Activated naive CD4-positive, alpha-beta T cell treated with anti-CD3 and anti-CD28 coated beads for 36 hours (primary cell): ENCODE measurements at regions of chr9 and their contacts with region 1.

Region 1: GRCh38 chr9:84170521-84171141 is 169.9 kb downstream of the SLC28A3 start:
- DNase-seq: no peak
- H3K4me3 Mint-ChIP-seq: no peak overlapping the region
- H3K27ac Mint-ChIP-seq: no peak overlapping the region
- H3K4me1 Mint-ChIP-seq: no peaks in the 10 kb centered on the region
- H3K27me3 Mint-ChIP-seq: peaks cover 1% of the 10 kb centered on the region

Region 2: GRCh38 chr9:84136092-84136868 is 34.4 kb before region 1 on chr9:
- CTCF ChIA-PET with region 1: interaction called, 10 read pairs
- intact Hi-C with region 1: no loop called
- DNase-seq: no peak
- H3K4me3 Mint-ChIP-seq: no peak overlapping the region
- H3K27ac Mint-ChIP-seq: no peak overlapping the region
- H3K4me1 Mint-ChIP-seq: peaks cover 9% of the 10 kb centered on the region
- H3K27me3 Mint-ChIP-seq: peaks cover 26% of the 10 kb centered on the region

Region 3: DNA sequence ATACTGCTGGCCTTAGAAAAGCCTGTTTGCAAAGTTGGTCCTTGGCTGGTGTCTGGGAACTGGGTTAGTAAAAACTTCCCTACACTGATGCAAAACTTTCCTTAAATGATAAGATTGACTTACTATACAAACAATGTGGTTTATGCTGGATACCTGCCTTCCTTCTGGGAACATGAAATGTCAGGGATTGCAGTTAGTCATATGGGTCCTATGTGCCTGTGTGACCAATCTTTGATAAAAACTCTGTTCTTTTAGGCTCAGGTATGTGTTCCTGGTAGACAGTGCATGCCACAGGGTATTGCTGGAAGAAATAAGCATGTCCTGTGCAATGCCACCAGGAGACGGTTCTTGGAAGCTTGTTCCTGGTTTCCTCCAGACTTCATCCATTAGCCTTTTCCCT is 16.7 kb before region 1 on chr9:
- CTCF ChIA-PET with region 1: no interaction called
- intact Hi-C with region 1: no loop called
- DNase-seq: no peak
- H3K4me3 Mint-ChIP-seq: no peak overlapping the region
- H3K27ac Mint-ChIP-seq: no peak overlapping the region
- H3K4me1 Mint-ChIP-seq: no peaks in the 10 kb centered on the region
- H3K27me3 Mint-ChIP-seq: no peaks in the 10 kb centered on the region